ENCODE measurements at regions of chr2 and their contacts with region 1.

Region 1: DNA sequence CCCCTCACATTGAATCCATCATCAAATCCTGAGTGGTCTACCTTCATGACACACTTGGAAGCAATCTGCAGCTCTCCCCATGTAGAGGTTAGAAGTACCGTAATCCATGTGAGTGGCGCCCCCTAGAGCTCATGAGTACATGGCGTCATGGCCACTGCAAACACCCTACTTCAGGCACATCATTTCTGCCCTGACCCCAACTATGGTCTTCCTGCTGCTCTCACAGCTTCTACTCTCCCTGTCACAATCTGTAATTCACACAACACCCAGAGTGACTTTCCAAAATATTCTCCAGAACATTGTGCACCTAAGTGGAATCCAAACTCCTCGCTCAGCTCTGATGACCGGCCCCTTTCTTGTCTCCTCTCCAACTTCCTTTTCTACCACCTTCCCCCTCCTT is 141.9 kb downstream of the ANKRD44 start:
- DNase-seq: peak; percentile 73
- H3K4me3 ChIP-seq: no peak overlapping the region
- H3K27ac ChIP-seq: no peak overlapping the region
- H3K4me1 ChIP-seq: peaks cover 3% of the 10 kb centered on the region
- H3K27me3 ChIP-seq: no peaks in the 10 kb centered on the region
- CTCF ChIP-seq: peak; percentile 74 to 84
- POLR2A ChIP-seq: no peak

Region 2: DNA sequence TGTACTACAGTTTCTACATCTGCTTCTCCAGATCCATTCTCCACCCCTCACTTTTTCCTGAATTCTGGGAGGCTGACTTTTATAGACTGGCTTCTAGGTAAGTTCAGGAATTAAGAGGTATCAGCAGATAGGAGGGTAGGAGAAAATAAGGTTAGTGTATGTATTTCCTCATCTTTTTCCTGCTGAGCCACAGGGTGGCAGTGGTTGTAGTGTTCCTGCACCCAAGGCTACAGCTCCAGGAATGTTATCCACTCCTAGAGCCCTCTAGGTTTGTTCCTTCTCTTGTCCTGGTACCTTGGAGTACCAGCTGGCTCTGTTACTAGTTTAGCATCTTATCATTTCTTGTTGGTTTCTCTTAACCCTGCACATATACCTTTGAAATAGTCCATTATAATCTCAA is 318.8 kb before region 1 on chr2:
- CTCF ChIA-PET with region 1: interaction called, 16 read pairs
- POLR2A ChIA-PET with region 1: no interaction called
- dilution Hi-C with region 1: no loop called
- intact Hi-C with region 1: no loop called
- DNase-seq: peak; percentile 43
- H3K4me3 ChIP-seq: no peak overlapping the region
- H3K27ac ChIP-seq: no peak overlapping the region
- H3K4me1 ChIP-seq: peaks cover 17% of the 10 kb centered on the region
- H3K27me3 ChIP-seq: no peaks in the 10 kb centered on the region
- CTCF ChIP-seq: peak; percentile 27 to 32
- POLR2A ChIP-seq: no peak

Region 3: DNA sequence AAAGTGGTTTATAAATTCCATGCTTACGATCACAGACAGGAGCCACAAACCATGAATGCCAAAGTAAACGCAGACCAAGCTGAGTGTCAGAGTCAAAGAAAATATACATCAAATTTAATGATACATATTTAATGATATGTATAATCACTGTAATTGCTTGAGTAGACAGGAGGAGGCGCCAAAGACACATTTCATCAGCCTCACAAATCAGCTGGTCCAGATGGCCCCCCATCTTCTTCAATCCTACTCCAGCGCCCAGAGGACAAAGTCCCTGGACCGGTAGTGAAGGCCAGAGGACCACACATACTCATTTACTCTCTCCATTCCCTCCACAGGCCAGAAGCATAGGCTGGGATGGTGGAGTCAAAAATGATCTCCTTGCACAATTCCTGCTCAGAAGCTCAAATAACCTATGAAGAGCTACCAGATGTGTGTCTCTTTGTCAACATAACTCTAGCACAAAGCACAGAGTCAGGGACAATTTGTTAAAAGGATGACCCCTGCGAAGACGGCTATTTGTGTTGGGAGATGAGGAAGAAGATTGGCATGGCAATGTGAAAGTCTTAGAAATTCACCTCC is 92.9 kb before region 1 on chr2:
- CTCF ChIA-PET with region 1: interaction called, 13 read pairs
- POLR2A ChIA-PET with region 1: no interaction called
- dilution Hi-C with region 1: no loop called
- intact Hi-C with region 1: loop called (anchors 1 kb)
- DNase-seq: no peak
- H3K4me3 ChIP-seq: no peak overlapping the region
- H3K27ac ChIP-seq: no peak overlapping the region
- H3K4me1 ChIP-seq: peaks cover 10% of the 10 kb centered on the region
- H3K27me3 ChIP-seq: no peaks in the 10 kb centered on the region
- CTCF ChIP-seq: peak; percentile 20 to 52
- POLR2A ChIP-seq: no peak

Region 4: GRCh38 chr2:197137231-197137630 is 31.5 kb before region 1 on chr2:
- CTCF ChIA-PET with region 1: interaction called, 90 read pairs
- POLR2A ChIA-PET with region 1: no interaction called
- dilution Hi-C with region 1: no loop called
- intact Hi-C with region 1: no loop called
- DNase-seq: peak; percentile 79
- H3K4me3 ChIP-seq: peak overlapping the region in 1 of 3 experiments; percentile 9
- H3K27ac ChIP-seq: peak overlapping the region; percentile 71
- H3K4me1 ChIP-seq: peaks cover 25% of the 10 kb centered on the region
- H3K27me3 ChIP-seq: no peaks in the 10 kb centered on the region
- CTCF ChIP-seq: no peak
- POLR2A ChIP-seq: no peak

Region 5: GRCh38 chr2:197179744-197180498 is 11.2 kb after region 1 on chr2:
- CTCF ChIA-PET with region 1: interaction called, 58 read pairs
- POLR2A ChIA-PET with region 1: no interaction called
- dilution Hi-C with region 1: no loop called
- intact Hi-C with region 1: no loop called
- DNase-seq: peak; percentile 82
- H3K4me3 ChIP-seq: no peak overlapping the region
- H3K27ac ChIP-seq: peak overlapping the region; percentile 76
- H3K4me1 ChIP-seq: peaks cover 15% of the 10 kb centered on the region
- H3K27me3 ChIP-seq: no peaks in the 10 kb centered on the region
- CTCF ChIP-seq: no peak
- POLR2A ChIP-seq: no peak

Region 6: DNA sequence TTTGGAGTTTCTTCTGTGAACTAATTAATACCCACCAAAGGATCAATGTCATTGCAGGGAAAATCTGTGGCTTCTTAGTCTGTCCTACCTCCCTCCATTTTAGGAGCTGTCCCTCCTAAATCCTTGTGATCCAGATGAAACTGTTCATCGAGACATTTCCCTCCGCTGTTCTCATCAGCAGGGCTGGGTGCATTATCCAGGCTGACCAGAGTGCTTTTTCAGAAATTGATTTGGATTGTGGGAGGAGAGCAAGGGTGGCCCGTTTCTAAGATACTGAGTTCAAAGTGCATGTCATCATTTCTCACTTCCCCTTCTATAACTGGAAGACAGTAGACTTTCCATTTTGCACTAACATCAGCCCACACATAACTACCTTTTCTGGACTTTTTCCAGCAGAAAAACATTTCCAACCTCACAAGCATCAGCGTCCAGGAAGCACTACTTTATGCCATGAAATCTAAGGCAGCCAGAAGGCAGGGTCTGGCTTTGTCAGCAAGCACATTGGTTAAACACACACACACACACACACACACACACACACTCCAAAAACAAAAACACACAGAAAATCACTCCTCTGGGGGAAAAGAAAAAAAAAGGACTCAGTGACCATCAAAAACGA is 47.8 kb after region 1 on chr2:
- CTCF ChIA-PET with region 1: no interaction called
- POLR2A ChIA-PET with region 1: no interaction called
- dilution Hi-C with region 1: no loop called
- intact Hi-C with region 1: no loop called
- DNase-seq: peak; percentile 34
- H3K4me3 ChIP-seq: no peak overlapping the region
- H3K27ac ChIP-seq: no peak overlapping the region
- H3K4me1 ChIP-seq: peaks cover 15% of the 10 kb centered on the region
- H3K27me3 ChIP-seq: no peaks in the 10 kb centered on the region
- CTCF ChIP-seq: no peak
- POLR2A ChIP-seq: no peak

Region 7: DNA sequence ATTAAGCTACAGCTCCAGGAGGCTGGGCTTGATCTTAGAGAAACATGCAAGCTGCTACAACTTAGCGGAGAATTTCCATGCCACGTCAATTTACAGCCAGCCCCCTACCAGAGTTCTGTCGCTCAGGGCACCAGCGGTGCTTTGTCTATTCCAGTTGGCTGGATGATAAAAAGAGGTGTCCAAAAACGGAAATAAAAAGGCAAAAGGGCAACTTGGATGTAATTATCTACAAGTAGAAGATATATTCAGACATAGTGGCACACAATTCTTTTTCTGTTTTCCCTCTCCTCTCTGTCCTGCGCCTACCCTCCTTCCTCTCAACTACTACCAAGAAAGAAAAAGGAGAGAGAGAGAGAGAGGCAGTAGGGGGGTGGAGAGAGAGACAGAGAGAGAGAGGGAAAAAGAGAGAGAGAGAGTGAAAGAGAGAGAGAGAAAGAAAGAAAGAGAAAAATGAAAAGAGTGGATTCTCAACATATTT is 507.0 kb after region 1 on chr2:
- CTCF ChIA-PET with region 1: no interaction called
- POLR2A ChIA-PET with region 1: no interaction called
- dilution Hi-C with region 1: no loop called
- intact Hi-C with region 1: no loop called
- DNase-seq: peak; percentile 88
- H3K4me3 ChIP-seq: peak overlapping the region; percentile 57 to 99 (median 98)
- H3K27ac ChIP-seq: peak overlapping the region; percentile 78
- H3K4me1 ChIP-seq: peaks cover 28% of the 10 kb centered on the region
- H3K27me3 ChIP-seq: no peaks in the 10 kb centered on the region
- CTCF ChIP-seq: no peak
- POLR2A ChIP-seq: peak; percentile 35

Region 8: DNA sequence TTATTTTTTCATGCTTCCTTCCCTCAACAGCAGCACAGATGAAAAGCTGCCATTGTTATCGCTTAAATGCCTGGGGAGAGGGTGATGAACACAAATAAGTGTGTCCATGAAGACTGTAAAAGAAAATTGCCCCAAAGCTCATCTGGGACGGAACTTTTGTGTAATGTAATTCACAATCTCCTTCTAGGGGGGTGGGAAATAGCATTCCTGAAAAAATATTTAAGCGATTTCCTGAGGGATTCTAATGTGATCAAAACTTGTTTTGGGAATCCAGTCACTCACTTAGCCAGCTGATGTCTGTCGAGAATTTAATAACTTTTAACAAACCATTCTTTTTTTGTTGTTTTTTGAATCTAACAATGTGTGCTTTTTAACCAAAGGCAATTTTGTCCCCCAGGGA is 1063.6 kb after region 1 on chr2:
- CTCF ChIA-PET with region 1: no interaction called
- POLR2A ChIA-PET with region 1: no interaction called
- dilution Hi-C with region 1: no loop called
- intact Hi-C with region 1: no loop called
- DNase-seq: no peak
- H3K4me3 ChIP-seq: no peak overlapping the region
- H3K27ac ChIP-seq: no peak overlapping the region
- H3K4me1 ChIP-seq: no peaks in the 10 kb centered on the region
- H3K27me3 ChIP-seq: peaks cover 0 to 1% of the 10 kb centered on the region in 2 experiments
- CTCF ChIP-seq: no peak
- POLR2A ChIP-seq: no peak

Measured in endothelial cell of umbilical vein (primary cell).